Posterior cingulate gyrus (tissue), 11 donors: ENCODE measurements at regions of chr20 and their contacts with region 1.

Region 1: DNA sequence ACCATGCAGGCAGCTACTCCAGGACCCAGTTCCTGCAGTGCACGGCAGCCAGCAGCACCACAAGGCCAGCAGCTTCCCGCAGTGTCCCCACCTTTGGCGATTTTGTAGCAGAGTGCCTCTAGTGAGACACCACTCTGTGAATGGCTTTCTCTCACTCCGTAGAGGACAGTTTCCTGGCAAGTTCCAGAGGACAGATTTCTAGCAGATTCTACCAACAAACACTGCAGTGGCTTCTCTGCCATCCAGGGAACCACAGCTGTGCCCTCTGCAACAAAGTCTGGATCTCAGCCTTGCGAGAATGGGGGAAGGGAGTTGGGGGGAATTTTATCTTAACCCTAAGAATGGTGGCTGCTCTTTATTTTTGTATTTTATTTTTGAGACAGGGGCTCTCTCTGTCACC is 28.7 kb downstream of the SNHG17 start:
- DNase-seq: peak in 1 of 10 donors; percentile 24

Region 2: DNA sequence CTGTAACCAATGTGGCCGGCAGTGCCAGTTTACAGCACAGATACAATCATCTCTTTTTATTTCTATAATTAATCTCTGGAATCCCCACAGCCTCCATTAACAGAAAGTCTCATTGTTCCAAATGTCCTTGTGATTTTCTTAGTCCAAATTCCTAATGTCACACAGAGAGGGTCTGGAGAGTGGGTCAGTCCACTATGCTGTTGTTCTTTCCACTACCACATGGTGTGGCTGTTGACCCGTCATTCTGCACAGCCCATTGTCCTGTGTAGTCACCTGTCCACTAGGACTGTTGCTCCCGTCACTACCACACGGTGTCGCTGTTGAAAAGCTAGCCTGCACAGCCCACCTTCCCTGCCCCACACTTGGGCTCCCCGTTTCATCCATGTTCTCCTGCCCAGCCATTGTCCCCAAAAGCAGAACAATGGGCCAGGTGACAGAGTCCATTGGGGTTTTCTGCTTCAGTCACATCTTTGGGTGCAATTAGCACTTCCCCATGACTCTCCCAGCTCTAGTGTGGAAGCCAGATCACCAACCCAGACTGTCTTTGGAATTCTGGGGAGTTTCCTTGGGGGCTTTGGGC is 68.8 kb before region 1 on chr20:
- intact Hi-C with region 1: loop called (anchors 5 kb)
- DNase-seq: peak in 6 of 10 donors; percentile 17 to 78 (median 64)

Region 3: DNA sequence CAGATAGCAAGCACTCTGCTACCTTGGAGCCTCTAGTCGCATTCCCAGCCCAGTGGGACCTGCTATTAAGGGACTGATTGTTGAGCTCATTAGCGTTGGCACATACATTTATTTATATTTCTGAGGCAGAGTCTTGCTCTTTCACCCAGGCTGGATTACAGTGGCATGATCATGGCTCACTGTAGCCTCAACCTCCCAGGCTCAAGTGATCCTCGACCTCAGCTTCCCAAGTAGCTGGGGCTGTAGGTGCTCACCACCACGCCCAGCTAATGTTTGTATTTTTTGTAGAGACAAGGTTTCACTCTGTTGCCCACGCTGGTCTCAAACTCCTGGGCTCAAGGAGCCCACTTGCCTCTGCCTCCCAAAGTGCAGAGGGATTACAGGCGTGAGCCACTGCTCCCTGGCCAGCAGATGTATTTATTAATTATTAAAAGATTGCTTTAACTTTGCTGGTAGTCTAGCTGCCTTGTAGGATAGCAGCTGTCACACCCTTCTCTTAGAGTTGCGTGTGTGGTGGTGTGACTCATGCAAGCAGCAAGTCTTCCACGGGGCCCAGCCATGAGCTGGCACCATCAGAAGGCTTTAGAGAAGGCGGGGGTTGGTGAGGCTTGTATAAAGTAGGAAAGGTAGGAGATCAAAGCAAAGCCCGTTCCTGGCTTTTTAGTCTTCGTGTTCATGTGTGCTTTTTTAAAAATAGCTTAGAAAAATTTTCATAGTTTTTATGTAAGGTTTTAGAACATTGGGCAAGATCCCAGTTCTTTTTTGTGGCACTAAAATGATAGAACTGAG is 358.3 kb after region 1 on chr20:
- intact Hi-C with region 1: no loop called
- DNase-seq: peak in 8 of 10 donors; percentile 47 to 96 (median 75)